ENCODE measurements at regions of chr2 and their contacts with region 1.

Region 1: DNA sequence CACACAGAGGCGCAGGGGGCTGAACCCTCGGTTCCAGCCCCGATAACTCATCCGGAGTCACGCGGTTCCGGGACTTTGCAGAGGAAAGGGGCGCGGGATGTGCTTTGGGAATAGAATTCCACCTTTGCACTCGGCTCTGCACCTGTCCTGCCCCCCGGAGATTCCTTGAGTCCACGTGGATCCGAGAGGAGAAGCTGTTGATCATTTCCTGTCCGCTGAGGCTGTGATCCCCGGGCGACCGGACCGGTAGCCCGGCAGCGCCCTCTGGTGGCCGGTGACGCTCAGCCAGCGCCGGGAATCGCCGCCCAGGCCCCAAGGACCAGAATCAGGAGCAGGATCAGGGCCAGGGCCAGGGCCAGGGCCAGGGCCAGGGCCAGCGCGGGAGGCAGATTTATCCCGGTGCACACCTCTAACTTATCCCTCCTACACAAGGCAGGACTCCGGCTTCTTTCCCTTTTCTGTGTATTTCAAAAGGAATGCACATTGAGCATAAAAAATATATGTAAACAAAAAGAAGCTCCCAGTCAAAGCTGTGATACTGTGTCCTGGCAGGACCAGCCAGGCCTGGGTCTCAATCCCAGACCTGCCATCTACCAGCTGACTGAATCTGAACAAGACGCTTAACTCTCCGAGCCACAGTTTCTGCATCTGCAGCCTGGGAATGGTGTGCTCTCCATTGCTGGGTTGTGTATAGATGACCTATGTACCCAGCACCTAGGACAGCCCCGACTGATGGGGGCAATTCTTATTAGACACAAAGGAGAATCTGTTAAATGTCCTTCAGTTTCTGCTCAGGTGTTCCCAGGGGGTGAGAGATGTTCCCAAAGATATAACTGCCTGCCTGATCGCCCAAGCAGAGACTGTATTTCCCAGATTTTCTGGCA is 8.5 kb upstream of the SPATA3 start:
- DNase-seq: peak; percentile 87
- H3K4me3 ChIP-seq: peak overlapping the region in 3 of 4 donors; percentile 37 to 45 (median 42)
- H3K27ac ChIP-seq: no peak overlapping the region
- H3K4me1 ChIP-seq: peaks cover 0 to 7% (median 5%) of the 10 kb centered on the region in 4 donors
- H3K27me3 ChIP-seq: peaks cover 3 to 23% (median 22%) of the 10 kb centered on the region in 3 donors
- CTCF ChIP-seq: peak; percentile 63 to 91 (median 77)
- EP300 ChIP-seq: no peak
- POLR2A ChIP-seq: no peak

Region 2: GRCh38 chr2:230824406-230824978 is 162.9 kb before region 1 on chr2:
- intact Hi-C with region 1: loop called (anchors 1 kb)
- DNase-seq: no peak
- H3K4me3 ChIP-seq: peak overlapping the region in 3 of 4 donors; percentile 14 to 34 (median 20)
- H3K27ac ChIP-seq: no peak overlapping the region
- H3K4me1 ChIP-seq: peaks cover 0 to 17% (median 12%) of the 10 kb centered on the region in 4 donors
- H3K27me3 ChIP-seq: peaks cover 5 to 35% (median 25%) of the 10 kb centered on the region in 3 donors
- CTCF ChIP-seq: peak in 3 of 4 experiments; percentile 64 to 73 (median 68)
- EP300 ChIP-seq: no peak
- POLR2A ChIP-seq: no peak

Region 3: DNA sequence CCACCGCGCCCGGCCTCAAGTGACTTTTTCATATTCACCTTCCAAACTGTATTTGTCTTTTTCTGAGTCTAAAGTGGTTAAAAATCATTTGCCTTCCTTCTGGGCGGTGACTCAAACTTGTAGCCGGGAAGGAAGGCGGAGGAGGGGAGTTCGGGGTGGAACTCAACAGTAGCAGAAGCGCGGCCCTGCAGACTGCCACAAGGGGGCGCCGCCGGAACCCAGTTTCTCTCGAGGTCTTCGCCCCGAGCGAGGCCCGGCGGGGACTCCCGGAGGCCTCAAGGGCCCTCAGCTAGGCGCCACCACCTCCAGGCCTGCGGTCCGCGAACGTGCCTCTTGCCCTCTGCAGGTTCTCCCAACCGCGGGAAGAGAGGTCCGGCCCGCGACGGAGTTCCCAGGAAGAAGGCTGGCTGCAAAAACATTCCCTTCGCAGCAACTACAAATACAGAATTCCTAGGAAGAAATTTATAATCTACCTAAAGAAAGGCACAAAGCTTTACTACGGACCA is 139.4 kb before region 1 on chr2:
- intact Hi-C with region 1: loop called (anchors 1 kb)
- DNase-seq: peak; percentile 92
- H3K4me3 ChIP-seq: no peak overlapping the region
- H3K27ac ChIP-seq: no peak overlapping the region
- H3K4me1 ChIP-seq: peaks cover 0 to 9% (median 4%) of the 10 kb centered on the region in 4 donors
- H3K27me3 ChIP-seq: no peaks in the 10 kb centered on the region
- CTCF ChIP-seq: peak; percentile 75 to 94 (median 91)
- EP300 ChIP-seq: no peak
- POLR2A ChIP-seq: no peak

Region 4: DNA sequence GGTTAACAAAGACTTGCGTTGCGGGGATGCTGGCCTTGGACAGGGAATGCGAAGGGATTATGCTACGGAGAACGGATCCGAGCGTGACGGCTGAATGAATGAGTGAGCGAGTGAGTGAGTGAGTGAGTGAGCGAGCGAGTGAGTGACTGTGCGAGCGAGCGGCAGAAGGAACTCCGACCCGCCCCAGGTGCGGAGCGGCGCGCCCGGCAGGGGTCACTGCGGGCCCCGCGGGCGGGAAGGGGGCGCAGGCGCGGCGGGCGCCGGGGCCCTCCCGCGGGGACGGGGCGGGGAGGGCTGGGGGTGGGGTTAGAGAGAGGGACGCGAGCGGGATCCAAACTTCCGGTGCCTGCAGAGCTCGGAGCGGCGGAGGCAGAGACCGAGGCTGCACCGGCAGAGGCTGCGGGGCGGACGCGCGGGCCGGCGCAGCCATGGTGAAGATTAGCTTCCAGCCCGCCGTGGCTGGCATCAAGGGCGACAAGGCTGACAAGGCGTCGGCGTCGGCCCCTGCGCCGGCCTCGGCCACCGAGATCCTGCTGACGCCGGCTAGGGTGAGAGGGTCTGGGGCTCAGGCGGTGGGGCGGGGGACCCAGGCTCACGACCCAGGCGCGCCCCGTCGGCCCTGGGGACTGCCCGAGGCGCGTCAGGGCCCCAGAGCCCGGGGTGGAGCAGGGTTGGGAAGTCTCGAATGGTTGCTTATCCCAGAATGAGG is 122.6 kb before region 1 on chr2 and contains the start of gene ITM2C:
- intact Hi-C with region 1: loop called (anchors 5 kb)
- DNase-seq: peak; percentile 84
- H3K4me3 ChIP-seq: peak within 1 kb of the TSS; percentile 66 to 84 (median 78)
- H3K27ac ChIP-seq: peak within 1 kb of the TSS; percentile 71 to 88 (median 82)
- H3K4me1 ChIP-seq: peaks cover 0 to 51% (median 47%) of the 10 kb centered on the region in 4 donors
- H3K27me3 ChIP-seq: no peaks in the 10 kb centered on the region
- CTCF ChIP-seq: peak in 1 of 4 experiments; percentile 35
- EP300 ChIP-seq: no peak
- POLR2A ChIP-seq: peak; percentile 61 to 67
- total RNA-seq, gene ITM2C: 107 to 206 (median 117) TPM

Region 5: DNA sequence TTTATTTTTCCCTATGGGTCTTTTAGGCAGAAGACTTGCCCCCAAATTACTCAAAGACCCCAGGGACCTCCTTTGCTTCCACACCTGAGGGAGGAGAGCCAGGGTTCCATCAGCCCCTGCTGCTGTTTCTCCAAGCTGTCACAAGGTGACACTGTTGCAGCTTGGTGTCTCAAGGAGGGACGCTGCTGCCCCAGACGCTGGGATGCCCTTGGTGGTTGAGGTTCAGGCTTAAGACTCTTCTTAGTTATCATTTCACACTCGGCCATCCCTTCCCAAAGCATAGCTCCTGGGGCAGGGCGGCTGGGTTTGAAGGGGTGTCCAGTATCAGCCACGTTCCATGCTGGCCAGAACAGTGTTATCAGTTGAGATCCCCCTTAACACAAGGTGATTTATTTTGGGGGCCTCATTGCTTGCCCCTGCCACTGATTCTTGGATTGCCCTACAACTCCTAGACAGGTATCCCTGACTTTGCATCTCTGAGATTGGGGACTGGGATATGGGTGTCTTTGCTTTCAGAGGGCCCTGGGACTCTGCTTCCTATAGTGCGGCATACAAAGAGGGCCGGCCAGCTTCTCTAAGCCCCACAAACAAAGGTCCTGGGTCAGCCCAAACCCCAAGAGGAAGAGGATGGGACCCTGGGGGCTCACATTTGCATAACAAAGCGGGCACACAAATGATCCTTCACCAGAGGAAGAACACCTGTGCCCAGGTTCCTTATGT is 85.0 kb before region 1 on chr2:
- intact Hi-C with region 1: loop called (anchors 5 kb)
- DNase-seq: peak; percentile 50
- H3K4me3 ChIP-seq: no peak overlapping the region
- H3K27ac ChIP-seq: no peak overlapping the region
- H3K4me1 ChIP-seq: no peaks in the 10 kb centered on the region
- H3K27me3 ChIP-seq: no peaks in the 10 kb centered on the region
- CTCF ChIP-seq: peak in 2 of 4 experiments; percentile 14 to 27
- EP300 ChIP-seq: no peak
- POLR2A ChIP-seq: no peak

Region 6: DNA sequence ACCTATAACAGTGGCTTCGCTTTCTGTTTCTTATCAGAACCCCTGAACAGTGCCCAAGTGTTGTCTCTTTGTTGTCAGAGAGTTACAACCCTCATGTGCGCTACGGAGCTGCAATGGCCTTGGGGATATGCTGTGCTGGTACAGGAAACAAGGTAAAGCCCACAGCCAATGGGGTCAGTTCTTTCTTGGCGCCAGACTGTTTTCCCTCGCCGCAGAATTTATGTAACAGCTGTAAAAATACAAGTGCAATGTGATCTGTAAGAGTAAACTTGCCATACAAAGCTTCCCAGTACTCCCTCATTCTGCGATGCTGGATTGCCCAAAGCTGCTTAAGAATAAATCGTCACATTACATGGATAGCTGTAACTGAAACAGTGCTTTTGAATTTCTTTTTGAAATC is 151.3 kb after region 1 on chr2:
- intact Hi-C with region 1: no loop called
- DNase-seq: no peak
- H3K4me3 ChIP-seq: peak overlapping the region in 1 of 4 donors; percentile 17
- H3K27ac ChIP-seq: peak overlapping the region; percentile 25 to 61 (median 56)
- H3K4me1 ChIP-seq: peaks cover 0 to 23% (median 3%) of the 10 kb centered on the region in 4 donors
- H3K27me3 ChIP-seq: no peaks in the 10 kb centered on the region
- CTCF ChIP-seq: no peak
- EP300 ChIP-seq: no peak
- POLR2A ChIP-seq: no peak

Region 7: GRCh38 chr2:231674587-231675338 is 687.4 kb after region 1 on chr2:
- intact Hi-C with region 1: no loop called
- DNase-seq: peak; percentile 90
- H3K4me3 ChIP-seq: no peak overlapping the region
- H3K27ac ChIP-seq: peak overlapping the region; percentile 90 to 94 (median 90)
- H3K4me1 ChIP-seq: peaks cover 0 to 54% (median 49%) of the 10 kb centered on the region in 4 donors
- H3K27me3 ChIP-seq: no peaks in the 10 kb centered on the region
- CTCF ChIP-seq: peak; percentile 88 to 95 (median 94)
- EP300 ChIP-seq: peak in 1 of 4 donors; percentile 62
- POLR2A ChIP-seq: no peak

Region 8: DNA sequence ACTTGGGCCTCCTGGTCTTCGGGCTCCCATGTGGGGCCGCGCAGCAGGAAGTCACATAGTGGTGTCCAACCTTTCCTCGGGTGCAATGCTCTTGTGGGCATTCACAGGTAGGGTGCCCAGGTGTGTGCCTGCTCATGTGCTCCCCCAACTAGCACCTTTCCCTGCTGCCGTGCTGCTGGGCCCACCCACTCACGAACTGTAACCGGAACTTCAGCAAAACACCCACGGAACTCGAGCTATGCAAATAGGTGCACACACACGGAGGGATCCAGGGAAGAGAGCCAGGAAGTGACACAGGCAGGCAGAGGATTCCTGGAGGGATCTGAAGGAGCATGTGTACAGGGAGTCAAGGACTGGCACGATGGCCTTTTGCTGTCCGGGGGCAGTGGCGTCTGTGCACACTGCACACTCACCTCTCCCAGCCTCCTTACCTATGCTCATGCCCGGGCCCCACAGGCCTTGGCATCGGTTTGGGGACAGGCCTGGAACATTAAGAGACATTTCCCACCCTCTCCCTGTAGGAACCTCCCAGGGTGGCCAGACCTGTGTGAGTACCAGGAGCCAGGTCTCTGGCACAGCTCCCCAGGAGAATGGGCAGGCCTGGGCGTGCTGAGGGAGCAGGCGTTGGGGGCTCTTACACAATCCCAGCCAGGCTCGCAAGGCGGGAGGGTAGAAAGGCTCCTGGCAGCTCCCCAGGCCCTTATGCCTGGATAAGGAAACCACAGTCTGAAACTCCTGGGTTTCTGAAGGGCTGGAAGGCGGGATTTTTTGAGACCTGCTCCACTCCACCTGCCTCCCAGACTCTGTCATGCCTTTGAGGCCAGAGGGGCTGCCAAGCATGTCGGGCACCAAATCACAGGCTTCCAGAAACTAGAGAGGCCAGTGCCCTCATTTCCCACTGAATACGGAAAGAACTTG is 714.3 kb after region 1 on chr2:
- intact Hi-C with region 1: no loop called
- DNase-seq: peak; percentile 88
- H3K4me3 ChIP-seq: no peak overlapping the region
- H3K27ac ChIP-seq: peak overlapping the region; percentile 11 to 70 (median 32)
- H3K4me1 ChIP-seq: peaks cover 1 to 39% (median 26%) of the 10 kb centered on the region in 4 donors
- H3K27me3 ChIP-seq: no peaks in the 10 kb centered on the region
- CTCF ChIP-seq: no peak
- EP300 ChIP-seq: no peak
- POLR2A ChIP-seq: no peak

Region 9: GRCh38 chr2:231737761-231738160 is 750.4 kb after region 1 on chr2:
- intact Hi-C with region 1: no loop called
- DNase-seq: no peak
- H3K4me3 ChIP-seq: no peak overlapping the region
- H3K27ac ChIP-seq: no peak overlapping the region
- H3K4me1 ChIP-seq: no peaks in the 10 kb centered on the region
- H3K27me3 ChIP-seq: no peaks in the 10 kb centered on the region
- CTCF ChIP-seq: no peak
- EP300 ChIP-seq: no peak
- POLR2A ChIP-seq: no peak